Transverse colon (tissue), 4 donors: ENCODE measurements at regions of chr18 and their contacts with region 1.

Region 1: GRCh38 chr18:29512203-29512602 is 1335.3 kb upstream of the CDH2 start:
- DNase-seq: no peak
- H3K4me3 ChIP-seq: no peak overlapping the region
- H3K27ac ChIP-seq: no peak overlapping the region
- H3K4me1 ChIP-seq: no peaks in the 10 kb centered on the region
- H3K27me3 ChIP-seq: no peaks in the 10 kb centered on the region
- CTCF ChIP-seq: no peak
- EP300 ChIP-seq: no peak
- POLR2A ChIP-seq: no peak

Region 2: GRCh38 chr18:29191263-29191662 is 320.9 kb before region 1 on chr18:
- in situ Hi-C with region 1: no loop called
- intact Hi-C with region 1: loop called (anchors 5 kb)
- DNase-seq: no peak
- H3K4me3 ChIP-seq: no peak overlapping the region
- H3K27ac ChIP-seq: no peak overlapping the region
- H3K4me1 ChIP-seq: no peaks in the 10 kb centered on the region
- H3K27me3 ChIP-seq: no peaks in the 10 kb centered on the region
- CTCF ChIP-seq: no peak
- EP300 ChIP-seq: no peak
- POLR2A ChIP-seq: no peak